ENCODE measurements at regions of chr6 and their contacts with region 1.

Region 1: DNA sequence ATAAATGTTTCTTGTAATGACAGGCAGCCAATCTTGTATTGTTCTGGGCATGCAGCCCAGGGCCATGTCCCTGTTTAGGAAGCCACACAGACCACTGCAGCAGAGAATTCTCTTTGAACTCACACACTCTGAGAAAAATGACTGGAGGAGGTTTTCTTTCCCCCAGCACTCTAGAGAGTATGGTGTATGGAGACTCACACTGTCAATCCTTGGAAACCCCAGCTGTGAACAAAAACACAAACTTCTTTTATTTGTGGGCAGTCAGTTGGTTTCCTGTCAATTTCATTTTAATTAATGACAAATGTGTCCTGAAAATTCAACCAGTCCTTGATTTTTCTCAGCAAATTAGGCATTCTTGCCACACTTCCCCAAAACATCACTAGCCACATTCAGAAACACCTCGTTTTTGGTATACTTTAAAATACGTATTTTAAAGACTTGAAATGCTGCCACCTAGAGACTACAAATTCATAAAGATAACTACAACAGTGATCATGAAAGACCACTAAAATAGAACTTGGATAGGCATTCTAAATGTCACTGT is 52.9 kb upstream of the UFL1 start:
- DNase-seq: no peak
- H3K4me3 Mint-ChIP-seq: no peak overlapping the region
- H3K27ac Mint-ChIP-seq: no peak overlapping the region
- H3K4me1 Mint-ChIP-seq: peaks cover 10% of the 10 kb centered on the region
- H3K27me3 Mint-ChIP-seq: peaks cover 4% of the 10 kb centered on the region

Region 2: GRCh38 chr6:95364016-95364604 is 1104.6 kb before region 1 on chr6:
- CTCF ChIA-PET with region 1: no interaction called
- intact Hi-C with region 1: loop called (anchors 2 kb)
- DNase-seq: no peak
- H3K4me3 Mint-ChIP-seq: no peak overlapping the region
- H3K27ac Mint-ChIP-seq: no peak overlapping the region
- H3K4me1 Mint-ChIP-seq: no peaks in the 10 kb centered on the region
- H3K27me3 Mint-ChIP-seq: no peaks in the 10 kb centered on the region

Region 3: GRCh38 chr6:96153775-96154174 is 315.0 kb before region 1 on chr6:
- CTCF ChIA-PET with region 1: no interaction called
- intact Hi-C with region 1: loop called (anchors 5 kb)
- DNase-seq: no peak
- H3K4me3 Mint-ChIP-seq: no peak overlapping the region
- H3K27ac Mint-ChIP-seq: no peak overlapping the region
- H3K4me1 Mint-ChIP-seq: no peaks in the 10 kb centered on the region
- H3K27me3 Mint-ChIP-seq: no peaks in the 10 kb centered on the region

Region 4: GRCh38 chr6:96521644-96522464 is 53.1 kb after region 1 on chr6 and contains the start of gene UFL1:
- CTCF ChIA-PET with region 1: no interaction called
- intact Hi-C with region 1: loop called (anchors 2 kb)
- DNase-seq: peak; percentile 92
- H3K4me3 Mint-ChIP-seq: peak within 1 kb of the TSS; percentile 98
- H3K27ac Mint-ChIP-seq: peak within 1 kb of the TSS; percentile 99
- H3K4me1 Mint-ChIP-seq: peaks cover 13% of the 10 kb centered on the region
- H3K27me3 Mint-ChIP-seq: no peaks in the 10 kb centered on the region
- total RNA-seq, gene UFL1: 28.3 to 28.7 TPM

Measured in activated naive CD4-positive, alpha-beta T cell treated with anti-CD3 and anti-CD28 coated beads for 36 hours (primary cell).